HEK293T (cell line): ENCODE measurements at regions of chr5 and their contacts with region 1.

Region 1: DNA sequence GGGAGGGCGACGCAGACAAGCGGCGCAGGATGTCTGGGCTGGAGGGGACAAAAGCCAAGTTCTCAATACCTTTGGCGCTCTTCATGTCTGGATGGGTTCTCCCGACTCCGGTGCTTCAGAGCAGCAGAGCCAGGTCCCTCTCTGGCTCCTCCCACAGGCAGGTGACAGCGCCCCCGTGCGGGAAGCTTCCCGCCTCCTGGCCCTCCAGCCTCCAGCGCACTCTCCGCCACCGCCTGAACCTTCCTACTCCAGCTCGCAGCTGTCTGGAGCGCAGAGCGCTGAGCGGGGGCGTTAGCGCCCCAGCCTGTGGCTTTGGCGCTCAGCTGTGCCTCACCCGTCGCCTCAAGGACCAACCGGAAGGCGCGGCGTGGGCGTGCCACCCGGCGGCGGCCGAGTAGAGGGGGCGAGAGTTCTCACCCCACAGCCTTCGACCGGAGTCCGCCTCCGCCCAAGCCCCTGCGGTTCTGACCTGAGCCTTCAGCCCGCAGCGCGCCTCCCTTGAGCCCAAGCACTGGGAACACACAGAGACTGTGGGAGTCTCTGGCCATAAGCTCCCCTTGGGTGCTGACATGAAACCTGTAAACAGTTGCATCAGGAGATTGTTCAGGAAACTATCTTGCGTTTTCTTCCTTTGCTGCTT is at the start of gene SLCO4C1:
- DNase-seq: peak; percentile 84

Region 2: DNA sequence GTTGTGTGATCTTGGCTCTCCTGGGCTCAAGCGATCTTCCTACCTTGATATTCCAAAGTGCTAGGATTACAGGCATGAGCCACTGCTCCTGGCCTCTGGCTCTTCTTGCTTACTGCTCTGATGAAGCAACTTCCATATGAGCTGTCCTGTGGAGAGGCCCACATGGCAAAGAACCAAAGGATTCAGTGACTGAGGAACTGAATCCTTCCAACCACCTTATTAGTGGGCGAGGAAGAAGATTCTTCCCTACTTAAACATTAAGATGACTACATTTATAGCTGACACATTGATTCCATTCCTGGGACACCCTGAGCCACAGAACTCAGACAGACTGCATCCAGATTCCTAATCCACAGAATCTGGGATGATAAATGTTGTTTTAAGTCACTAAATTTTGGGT is 16.3 kb after region 1 on chr5:
- CTCF ChIA-PET with region 1: interaction called, 10 read pairs
- POLR2A ChIA-PET with region 1: no interaction called
- DNase-seq: no peak